CD8-positive, alpha-beta T cell (primary cell): ENCODE measurements at regions of chr11 and their contacts with region 1.

Region 1: DNA sequence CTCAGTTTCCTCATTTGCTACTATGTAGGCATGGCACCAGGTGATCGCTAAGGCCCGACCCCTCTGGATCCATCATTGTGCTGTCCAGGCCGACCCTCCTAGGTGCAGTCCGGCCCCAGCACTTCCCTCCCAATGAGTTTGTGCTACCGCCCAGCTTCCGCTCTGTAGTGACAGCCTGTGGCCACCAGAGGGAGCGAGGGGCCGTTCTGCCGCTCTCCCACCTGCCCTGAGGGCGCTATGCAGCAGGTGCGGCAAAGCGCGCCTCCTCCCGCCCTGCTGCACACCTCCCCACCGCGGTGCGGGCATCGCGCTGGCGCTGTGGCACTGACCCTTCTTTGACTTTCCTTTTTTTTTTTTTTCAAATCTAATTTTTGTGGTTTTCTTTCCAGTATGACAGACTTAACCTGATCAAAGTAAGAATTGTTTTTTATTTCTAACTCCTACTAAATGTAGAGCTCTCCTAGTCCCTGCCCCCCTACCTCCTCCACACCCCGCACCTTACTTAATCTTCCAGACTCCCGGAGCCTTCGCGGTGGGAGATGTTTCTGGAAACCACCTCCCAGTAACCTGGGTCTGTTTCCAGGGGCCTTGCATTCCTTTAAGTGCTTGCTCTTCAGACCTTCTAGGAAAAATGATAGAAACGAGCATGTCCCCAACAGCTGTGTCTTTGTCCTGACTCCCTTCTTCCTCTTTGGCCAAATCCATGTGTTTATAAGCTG is 73.7 kb downstream of the SCN3B start:
- DNase-seq: peak; percentile 24 to 78 (median 62)
- ATAC-seq: peak; percentile 96
- H3K4me3 ChIP-seq: no peak overlapping the region
- H3K4me3 Mint-ChIP-seq: no peak overlapping the region
- H3K27ac ChIP-seq: no peak overlapping the region
- H3K27ac Mint-ChIP-seq: no peak overlapping the region
- H3K4me1 ChIP-seq: peaks cover 8% of the 10 kb centered on the region
- H3K4me1 Mint-ChIP-seq: peaks cover 18% of the 10 kb centered on the region
- H3K27me3 ChIP-seq: no peaks in the 10 kb centered on the region
- H3K27me3 Mint-ChIP-seq: no peaks in the 10 kb centered on the region
- CTCF ChIP-seq: peak; percentile 90

Region 2: GRCh38 chr11:123381817-123382554 is 198.7 kb before region 1 on chr11:
- CTCF ChIA-PET with region 1: no interaction called
- POLR2A ChIA-PET with region 1: no interaction called
- intact Hi-C with region 1: no loop called
- DNase-seq: peak in 2 of 9 experiments; percentile 16 to 53
- ATAC-seq: no peak
- H3K4me3 ChIP-seq: no peak overlapping the region
- H3K4me3 Mint-ChIP-seq: no peak overlapping the region
- H3K27ac ChIP-seq: peak overlapping the region in 1 of 2 experiments; percentile 1
- H3K27ac Mint-ChIP-seq: no peak overlapping the region
- H3K4me1 ChIP-seq: no peaks in the 10 kb centered on the region
- H3K4me1 Mint-ChIP-seq: no peaks in the 10 kb centered on the region
- H3K27me3 ChIP-seq: no peaks in the 10 kb centered on the region
- H3K27me3 Mint-ChIP-seq: no peaks in the 10 kb centered on the region
- CTCF ChIP-seq: no peak

Region 3: GRCh38 chr11:123511037-123511870 is 69.5 kb before region 1 on chr11:
- CTCF ChIA-PET with region 1: interaction called, 4 read pairs
- POLR2A ChIA-PET with region 1: no interaction called
- intact Hi-C with region 1: loop called (anchors 1 to 2 kb)
- DNase-seq: peak; percentile 20 to 78 (median 56)
- ATAC-seq: peak; percentile 87
- H3K4me3 ChIP-seq: no peak overlapping the region
- H3K4me3 Mint-ChIP-seq: no peak overlapping the region
- H3K27ac ChIP-seq: no peak overlapping the region
- H3K27ac Mint-ChIP-seq: no peak overlapping the region
- H3K4me1 ChIP-seq: no peaks in the 10 kb centered on the region
- H3K4me1 Mint-ChIP-seq: peaks cover 6% of the 10 kb centered on the region
- H3K27me3 ChIP-seq: no peaks in the 10 kb centered on the region
- H3K27me3 Mint-ChIP-seq: no peaks in the 10 kb centered on the region
- CTCF ChIP-seq: peak; percentile 86

Region 4: GRCh38 chr11:123696183-123696582 is 115.5 kb after region 1 on chr11:
- CTCF ChIA-PET with region 1: no interaction called
- POLR2A ChIA-PET with region 1: no interaction called
- intact Hi-C with region 1: no loop called
- DNase-seq: no peak
- ATAC-seq: no peak
- H3K4me3 ChIP-seq: no peak overlapping the region
- H3K4me3 Mint-ChIP-seq: no peak overlapping the region
- H3K27ac ChIP-seq: no peak overlapping the region
- H3K27ac Mint-ChIP-seq: no peak overlapping the region
- H3K4me1 ChIP-seq: no peaks in the 10 kb centered on the region
- H3K4me1 Mint-ChIP-seq: no peaks in the 10 kb centered on the region
- H3K27me3 ChIP-seq: peaks cover 0 to 3% of the 10 kb centered on the region in 2 experiments
- H3K27me3 Mint-ChIP-seq: peaks cover 24% of the 10 kb centered on the region
- CTCF ChIP-seq: no peak